ENCODE measurements at regions of chr15 and their contacts with region 1.

Region 1: DNA sequence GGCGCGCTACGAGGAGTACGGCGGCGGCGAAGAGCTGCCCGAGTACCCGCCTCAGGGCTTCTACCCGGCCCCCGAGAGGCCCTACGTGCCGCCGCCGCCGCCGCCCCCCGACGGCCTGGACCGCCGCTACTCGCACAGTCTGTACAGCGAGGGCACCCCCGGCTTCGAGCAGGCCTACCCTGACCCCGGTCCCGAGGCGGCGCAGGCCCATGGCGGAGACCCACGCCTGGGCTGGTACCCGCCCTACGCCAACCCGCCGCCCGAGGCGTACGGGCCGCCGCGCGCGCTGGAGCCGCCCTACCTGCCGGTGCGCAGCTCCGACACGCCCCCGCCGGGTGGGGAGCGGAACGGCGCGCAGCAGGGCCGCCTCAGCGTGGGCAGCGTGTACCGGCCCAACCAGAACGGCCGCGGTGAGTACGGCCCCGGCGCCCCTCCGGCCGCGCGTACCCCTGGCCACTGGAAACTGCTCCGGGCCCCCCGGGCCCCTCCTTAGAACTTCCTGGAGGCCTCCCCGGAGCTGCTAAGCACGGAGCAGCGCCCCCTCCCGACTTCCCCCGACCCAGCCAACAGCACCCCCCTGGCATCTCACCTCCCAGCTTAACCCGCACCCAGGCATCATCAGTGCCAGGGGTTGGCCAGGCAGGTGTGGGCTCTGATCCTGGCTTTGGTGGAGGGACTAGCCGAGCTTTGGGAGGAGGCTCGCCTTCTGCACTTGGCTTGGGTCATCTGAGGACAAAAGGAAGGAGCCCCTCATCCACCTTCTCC is 1.4 kb downstream of the LOXL1 start:
- DNase-seq: peak; percentile 33 to 47 (median 42)
- H3K4me3 ChIP-seq: peak overlapping the region in 2 of 3 experiments; percentile 3 to 69
- H3K4me3 Mint-ChIP-seq: peak overlapping the region; percentile 45 to 87
- H3K27ac ChIP-seq: no peak overlapping the region
- H3K27ac Mint-ChIP-seq: no peak overlapping the region
- H3K4me1 ChIP-seq: peaks cover 20 to 46% of the 10 kb centered on the region in 2 donors
- H3K4me1 Mint-ChIP-seq: peaks cover 31% of the 10 kb centered on the region
- H3K27me3 ChIP-seq: peaks cover 13 to 49% of the 10 kb centered on the region in 2 donors
- H3K27me3 Mint-ChIP-seq: peaks cover 39 to 57% (median 41%) of the 10 kb centered on the region in 3 donors
- CTCF ChIP-seq: peak; percentile 75

Region 2: GRCh38 chr15:73786518-73786917 is 141.1 kb before region 1 on chr15:
- intact Hi-C with region 1: no loop called
- DNase-seq: no peak
- H3K4me3 ChIP-seq: no peak overlapping the region
- H3K4me3 Mint-ChIP-seq: no peak overlapping the region
- H3K27ac ChIP-seq: no peak overlapping the region
- H3K27ac Mint-ChIP-seq: no peak overlapping the region
- H3K4me1 ChIP-seq: no peaks in the 10 kb centered on the region
- H3K4me1 Mint-ChIP-seq: no peaks in the 10 kb centered on the region
- H3K27me3 ChIP-seq: no peaks in the 10 kb centered on the region
- H3K27me3 Mint-ChIP-seq: peaks cover 1 to 5% (median 4%) of the 10 kb centered on the region in 3 donors
- CTCF ChIP-seq: no peak

Region 3: GRCh38 chr15:73882774-73883419 is 44.8 kb before region 1 on chr15:
- intact Hi-C with region 1: loop called in 1 of 2 experiments (anchors 5 kb)
- DNase-seq: no peak
- H3K4me3 ChIP-seq: no peak overlapping the region
- H3K4me3 Mint-ChIP-seq: no peak overlapping the region
- H3K27ac ChIP-seq: no peak overlapping the region
- H3K27ac Mint-ChIP-seq: no peak overlapping the region
- H3K4me1 ChIP-seq: no peaks in the 10 kb centered on the region
- H3K4me1 Mint-ChIP-seq: no peaks in the 10 kb centered on the region
- H3K27me3 ChIP-seq: no peaks in the 10 kb centered on the region
- H3K27me3 Mint-ChIP-seq: peaks cover 0 to 8% (median 3%) of the 10 kb centered on the region in 3 donors
- CTCF ChIP-seq: no peak

Region 4: DNA sequence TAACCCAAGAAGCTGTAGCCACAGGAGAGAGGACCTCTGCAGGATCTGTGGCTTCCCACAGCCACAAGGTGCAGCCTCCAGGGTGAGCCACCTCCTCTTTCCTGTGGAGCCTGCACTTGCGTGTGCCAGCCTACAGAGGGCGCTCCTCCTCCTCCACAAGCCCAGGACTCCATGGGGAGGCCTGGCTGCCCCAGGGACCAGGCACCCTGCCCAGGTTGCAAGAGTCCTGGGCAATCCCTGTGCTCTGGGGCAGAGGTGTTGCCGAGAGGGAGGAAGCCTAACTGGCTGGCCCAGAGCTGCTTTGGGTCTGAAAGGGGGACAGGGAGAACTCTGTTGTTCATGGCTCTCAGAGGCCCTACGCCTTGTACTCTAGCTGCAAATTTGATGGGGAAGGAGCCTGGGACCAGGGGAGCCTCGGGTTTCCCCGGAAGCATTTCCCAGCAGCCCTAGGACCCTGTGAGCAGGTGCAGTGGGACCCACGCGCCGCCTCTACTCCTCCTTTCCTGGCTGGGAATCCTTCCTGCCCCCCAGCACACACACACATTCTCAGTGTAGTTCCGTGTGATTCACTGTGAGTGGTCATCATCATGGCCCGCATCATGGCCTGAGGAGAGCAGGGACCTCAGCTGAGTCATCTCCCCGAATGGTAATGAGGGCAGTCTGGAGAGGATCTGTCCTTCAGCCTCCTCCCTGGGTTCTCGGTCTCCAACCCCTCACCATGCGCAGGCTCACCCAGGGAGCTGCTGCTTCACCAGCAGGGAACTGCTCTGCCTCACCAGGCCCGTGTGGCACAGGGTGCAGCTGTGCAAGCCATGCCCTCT is 30.0 kb before region 1 on chr15:
- intact Hi-C with region 1: loop called in 1 of 2 experiments (anchors 2 kb)
- DNase-seq: peak; percentile 37 to 56 (median 38)
- H3K4me3 ChIP-seq: no peak overlapping the region
- H3K4me3 Mint-ChIP-seq: no peak overlapping the region
- H3K27ac ChIP-seq: no peak overlapping the region
- H3K27ac Mint-ChIP-seq: no peak overlapping the region
- H3K4me1 ChIP-seq: no peaks in the 10 kb centered on the region
- H3K4me1 Mint-ChIP-seq: no peaks in the 10 kb centered on the region
- H3K27me3 ChIP-seq: no peaks in the 10 kb centered on the region
- H3K27me3 Mint-ChIP-seq: peaks cover 1 to 7% (median 3%) of the 10 kb centered on the region in 3 donors
- CTCF ChIP-seq: peak; percentile 89